Activated T-helper 1 cell treated with anti-CD3 and anti-CD28 coated beads, Interleukin-12 subunit alpha, Interleukin-12 subunit beta, Interleukin-2, Interleukin-4 antibody, amounts not matched to agents 30 ng/mL and 10 ng/mL and 1 ng/mL, durations not matched to agents 14 hours and 24 hours and 36 hours (primary cell): ENCODE measurements at regions of chr3 and their contacts with region 1.

Region 1: GRCh38 chr3:124467980-124468902 is 262.0 kb upstream of the UMPS start:
- DNase-seq: no peak
- H3K4me3 Mint-ChIP-seq: no peak overlapping the region
- H3K27ac Mint-ChIP-seq: no peak overlapping the region
- H3K4me1 Mint-ChIP-seq: no peaks in the 10 kb centered on the region
- H3K27me3 Mint-ChIP-seq: peaks cover 10% of the 10 kb centered on the region

Region 2: GRCh38 chr3:124014366-124014942 is 453.8 kb before region 1 on chr3:
- intact Hi-C with region 1: loop called (anchors 10 kb)
- DNase-seq: no peak
- H3K4me3 Mint-ChIP-seq: no peak overlapping the region
- H3K27ac Mint-ChIP-seq: no peak overlapping the region
- H3K4me1 Mint-ChIP-seq: no peaks in the 10 kb centered on the region
- H3K27me3 Mint-ChIP-seq: peaks cover 36% of the 10 kb centered on the region

Region 3: GRCh38 chr3:124351430-124352148 is 116.7 kb before region 1 on chr3:
- intact Hi-C with region 1: loop called (anchors 2 kb)
- DNase-seq: no peak
- H3K4me3 Mint-ChIP-seq: no peak overlapping the region
- H3K27ac Mint-ChIP-seq: no peak overlapping the region
- H3K4me1 Mint-ChIP-seq: no peaks in the 10 kb centered on the region
- H3K27me3 Mint-ChIP-seq: peaks cover 10% of the 10 kb centered on the region

Region 4: DNA sequence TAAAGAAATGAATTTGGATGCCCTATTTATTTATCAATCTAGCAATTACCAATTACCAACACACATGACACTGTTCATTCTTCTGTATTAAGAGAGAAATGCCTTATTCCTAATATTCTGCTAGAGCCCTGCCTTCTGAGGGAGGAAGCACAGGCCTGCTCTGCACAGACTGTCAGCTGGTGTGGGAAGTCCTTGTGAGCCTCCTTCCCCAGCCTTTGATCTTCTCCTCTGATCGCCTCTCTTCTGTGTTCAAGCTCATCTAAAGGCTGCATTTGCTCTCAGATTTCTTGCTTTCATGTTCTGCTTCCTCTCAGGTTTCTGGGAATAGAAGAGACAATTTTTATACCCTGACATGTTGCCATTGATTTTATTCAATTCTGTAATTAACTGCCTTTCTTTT is 28.6 kb before region 1 on chr3:
- intact Hi-C with region 1: no loop called
- DNase-seq: no peak
- H3K4me3 Mint-ChIP-seq: no peak overlapping the region
- H3K27ac Mint-ChIP-seq: no peak overlapping the region
- H3K4me1 Mint-ChIP-seq: no peaks in the 10 kb centered on the region
- H3K27me3 Mint-ChIP-seq: no peaks in the 10 kb centered on the region

Region 5: DNA sequence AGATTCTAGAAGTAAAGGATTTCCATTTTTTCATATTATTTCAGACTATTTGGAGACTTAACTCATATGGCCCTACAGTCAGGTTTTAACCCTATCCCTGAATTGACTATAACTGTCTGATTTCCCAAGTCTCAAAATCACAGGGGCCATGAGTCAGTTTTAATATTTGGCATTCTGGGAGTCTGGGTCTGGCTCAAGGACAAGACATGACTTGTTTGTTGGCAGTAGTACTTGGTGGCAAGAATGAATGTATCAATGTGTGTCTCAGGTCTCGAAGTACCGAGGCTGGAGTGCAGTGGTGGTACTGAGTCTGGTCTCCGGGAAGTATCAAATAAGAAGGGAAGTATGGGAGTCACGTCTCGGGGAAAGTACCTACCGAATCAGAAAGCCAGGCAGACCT is 272.8 kb after region 1 on chr3:
- intact Hi-C with region 1: no loop called
- DNase-seq: no peak
- H3K4me3 Mint-ChIP-seq: no peak overlapping the region
- H3K27ac Mint-ChIP-seq: no peak overlapping the region
- H3K4me1 Mint-ChIP-seq: peaks cover 13% of the 10 kb centered on the region
- H3K27me3 Mint-ChIP-seq: no peaks in the 10 kb centered on the region